ENCODE measurements at regions of chr4 and their contacts with region 1.

Region 1: DNA sequence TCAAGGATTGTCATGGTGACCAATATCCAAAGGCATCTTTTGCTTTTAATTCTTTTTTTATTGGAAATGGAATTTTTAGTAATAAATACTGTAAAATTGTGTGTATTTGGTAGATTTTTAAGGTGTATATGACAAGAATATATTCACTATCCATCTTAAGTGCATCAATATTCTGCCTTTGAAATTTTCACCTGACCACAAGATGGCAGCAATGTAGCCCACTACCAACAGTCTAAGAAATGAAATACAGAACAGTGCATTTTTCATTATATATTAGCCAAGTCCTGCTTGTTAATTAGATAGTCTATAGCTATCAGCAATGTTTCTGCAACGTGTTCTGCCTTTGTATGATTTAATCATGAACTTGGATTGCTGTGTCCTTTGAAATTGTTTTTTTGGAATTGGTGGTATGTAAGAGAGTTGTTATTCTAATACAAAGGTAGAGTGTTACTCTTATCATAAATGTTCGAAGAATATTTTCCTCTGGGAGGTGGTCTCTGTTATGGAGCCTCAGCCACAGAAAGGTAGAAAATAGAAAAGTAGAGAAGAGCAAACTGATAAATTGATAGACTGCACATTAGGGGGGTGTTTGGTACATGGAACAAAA is 38.2 kb downstream of the HPGDS start:
- DNase-seq: no peak
- H3K4me3 Mint-ChIP-seq: no peak overlapping the region
- H3K27ac Mint-ChIP-seq: no peak overlapping the region
- H3K4me1 Mint-ChIP-seq: no peaks in the 10 kb centered on the region
- H3K27me3 Mint-ChIP-seq: no peaks in the 10 kb centered on the region

Region 2: GRCh38 chr4:93994175-93994994 is 310.1 kb before region 1 on chr4:
- intact Hi-C with region 1: no loop called
- DNase-seq: no peak
- H3K4me3 Mint-ChIP-seq: no peak overlapping the region
- H3K27ac Mint-ChIP-seq: no peak overlapping the region
- H3K4me1 Mint-ChIP-seq: no peaks in the 10 kb centered on the region
- H3K27me3 Mint-ChIP-seq: no peaks in the 10 kb centered on the region

Region 3: DNA sequence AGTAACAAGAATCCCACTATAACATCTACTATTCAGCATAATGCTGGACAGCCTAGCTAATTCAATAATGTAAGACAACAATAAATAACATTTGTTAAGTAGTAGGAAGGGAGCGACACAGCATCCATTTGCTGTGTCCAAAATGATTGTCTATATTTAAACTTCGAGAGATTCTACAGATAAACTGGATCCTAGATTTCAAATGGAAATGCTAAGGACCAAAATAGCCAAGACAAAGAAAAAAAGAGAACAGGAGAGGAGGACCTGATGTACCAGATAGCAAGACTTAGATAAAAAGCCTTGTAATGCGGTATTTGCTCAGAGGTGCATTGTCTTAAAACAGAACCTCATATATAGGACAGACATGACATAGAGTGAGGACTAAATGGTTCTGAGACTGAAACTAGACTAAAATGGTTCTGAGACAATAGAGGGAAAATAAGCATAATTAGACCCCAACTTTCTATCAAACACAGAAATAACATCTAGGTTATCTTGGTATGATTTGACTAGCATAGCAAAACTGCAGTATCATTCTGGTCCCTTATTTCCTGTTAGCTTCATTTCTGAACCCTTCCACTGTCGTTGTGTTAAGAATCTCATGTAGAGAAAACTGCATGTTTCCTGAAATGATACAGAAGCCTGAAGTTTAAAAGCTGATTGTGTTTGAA is 34.3 kb after region 1 on chr4:
- intact Hi-C with region 1: loop called (anchors 2 kb)
- DNase-seq: no peak
- H3K4me3 Mint-ChIP-seq: peak overlapping the region; percentile 35
- H3K27ac Mint-ChIP-seq: peak overlapping the region; percentile 85
- H3K4me1 Mint-ChIP-seq: peaks cover 27% of the 10 kb centered on the region
- H3K27me3 Mint-ChIP-seq: peaks cover 3% of the 10 kb centered on the region

Region 4: DNA sequence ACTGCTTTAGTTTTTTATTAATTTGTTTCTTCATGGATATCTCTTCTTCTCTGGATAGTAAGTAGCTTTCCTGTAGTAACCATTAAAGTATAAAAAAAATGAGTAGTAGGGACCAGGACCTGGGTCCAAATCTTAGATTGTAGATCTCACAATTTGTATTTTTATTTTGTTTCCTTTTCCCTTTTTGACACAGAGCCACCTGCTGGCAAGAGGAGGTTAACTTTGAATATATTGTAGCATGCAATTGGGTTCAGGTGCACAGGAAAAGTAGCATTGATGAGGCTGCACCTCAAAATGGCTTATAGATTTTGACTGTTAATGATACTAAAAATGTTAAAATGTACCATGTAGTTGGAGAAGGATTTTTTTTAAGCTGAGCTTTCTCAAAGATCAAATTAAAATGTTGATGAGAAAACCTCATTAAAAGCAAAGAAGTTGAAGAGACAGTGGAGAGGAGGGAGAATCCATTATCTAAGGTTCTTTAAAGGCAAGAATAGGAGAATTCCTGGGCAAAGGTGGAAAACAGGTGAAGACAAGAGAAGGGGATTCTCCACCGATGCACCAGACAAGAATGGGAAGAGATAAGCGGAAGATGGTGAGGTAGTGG is 86.4 kb after region 1 on chr4:
- intact Hi-C with region 1: loop called (anchors 1 kb)
- DNase-seq: no peak
- H3K4me3 Mint-ChIP-seq: no peak overlapping the region
- H3K27ac Mint-ChIP-seq: no peak overlapping the region
- H3K4me1 Mint-ChIP-seq: no peaks in the 10 kb centered on the region
- H3K27me3 Mint-ChIP-seq: peaks cover 8% of the 10 kb centered on the region

Region 5: GRCh38 chr4:94406668-94407437 is 102.4 kb after region 1 on chr4:
- intact Hi-C with region 1: loop called (anchors 1 kb)
- DNase-seq: peak; percentile 15
- H3K4me3 Mint-ChIP-seq: no peak overlapping the region
- H3K27ac Mint-ChIP-seq: no peak overlapping the region
- H3K4me1 Mint-ChIP-seq: no peaks in the 10 kb centered on the region
- H3K27me3 Mint-ChIP-seq: peaks cover 5% of the 10 kb centered on the region

Region 6: GRCh38 chr4:94595879-94596483 is 291.5 kb after region 1 on chr4:
- intact Hi-C with region 1: loop called (anchors 1 kb)
- DNase-seq: no peak
- H3K4me3 Mint-ChIP-seq: no peak overlapping the region
- H3K27ac Mint-ChIP-seq: no peak overlapping the region
- H3K4me1 Mint-ChIP-seq: no peaks in the 10 kb centered on the region
- H3K27me3 Mint-ChIP-seq: no peaks in the 10 kb centered on the region